HAP-1 (cell line): ENCODE measurements at regions of chr5 and their contacts with region 1.

Region 1: DNA sequence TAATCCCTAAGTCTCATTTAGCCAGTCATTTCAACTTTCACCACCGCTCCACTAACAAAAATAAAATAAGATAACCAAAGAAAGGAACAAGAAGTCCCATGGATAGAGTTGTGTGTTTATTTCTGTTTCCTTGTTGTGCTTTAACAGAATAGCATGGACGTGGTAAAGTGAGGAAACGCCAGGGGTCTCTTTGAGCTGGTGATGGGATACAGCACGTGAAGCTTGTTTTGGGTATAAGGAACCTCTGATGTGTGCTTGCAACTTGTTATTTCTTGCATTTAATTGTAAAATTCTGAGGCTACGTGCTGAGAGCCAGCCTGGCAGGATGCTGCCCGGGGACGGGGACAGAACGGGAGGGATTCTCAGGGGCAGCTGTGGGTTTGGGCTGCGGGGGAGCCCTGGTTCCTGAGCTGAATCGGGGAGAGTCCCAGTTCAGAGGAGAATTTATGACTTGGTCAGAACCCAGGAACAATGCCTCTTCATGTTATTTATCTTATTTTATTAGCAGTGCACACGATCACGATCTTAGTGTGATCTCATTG is 63.4 kb downstream of the ANKRD33B start:
- DNase-seq: peak; percentile 5 to 20
- H3K4me3 ChIP-seq: peak overlapping the region; percentile 12
- H3K4me1 ChIP-seq: peaks cover 3% of the 10 kb centered on the region; the same call in 1 of the 2 replicates
- H3K27me3 ChIP-seq: no peaks in the 10 kb centered on the region

Region 2: GRCh38 chr5:10452768-10453331 is 174.4 kb before region 1 on chr5:
- in situ Hi-C with region 1: loop called (anchors 5 kb)
- DNase-seq: peak in 1 of 2 experiments; percentile 57
- H3K4me3 ChIP-seq: no peak overlapping the region
- H3K4me1 ChIP-seq: no peaks in the 10 kb centered on the region
- H3K27me3 ChIP-seq: no peaks in the 10 kb centered on the region